Activated naive CD4-positive, alpha-beta T cell treated with anti-CD3 and anti-CD28 coated beads for 36 hours (primary cell): ENCODE measurements at regions of chr12 and their contacts with region 1.

Region 1: DNA sequence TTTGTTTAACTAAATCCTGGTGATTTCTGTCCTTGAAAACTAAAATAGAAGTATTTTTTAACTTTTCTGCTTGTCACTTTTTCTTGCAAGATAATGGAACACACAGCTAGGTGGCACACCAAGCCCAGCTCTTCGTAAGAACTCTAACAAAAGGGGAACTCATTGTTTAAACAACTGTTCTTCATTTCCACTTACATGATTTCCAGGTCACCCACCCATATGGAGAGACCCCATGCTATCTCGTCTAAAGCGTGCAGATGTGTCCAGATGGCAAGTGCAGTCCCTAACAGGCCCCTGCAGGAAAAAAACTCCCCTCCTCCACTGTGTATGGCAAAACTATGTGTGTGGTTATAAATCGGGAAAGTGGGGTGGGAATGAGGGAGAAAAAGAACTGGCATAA is 43.3 kb upstream of the NT5DC3 start:
- DNase-seq: peak; percentile 75
- H3K4me3 Mint-ChIP-seq: no peak overlapping the region
- H3K27ac Mint-ChIP-seq: no peak overlapping the region
- H3K4me1 Mint-ChIP-seq: peaks cover 22% of the 10 kb centered on the region
- H3K27me3 Mint-ChIP-seq: no peaks in the 10 kb centered on the region

Region 2: DNA sequence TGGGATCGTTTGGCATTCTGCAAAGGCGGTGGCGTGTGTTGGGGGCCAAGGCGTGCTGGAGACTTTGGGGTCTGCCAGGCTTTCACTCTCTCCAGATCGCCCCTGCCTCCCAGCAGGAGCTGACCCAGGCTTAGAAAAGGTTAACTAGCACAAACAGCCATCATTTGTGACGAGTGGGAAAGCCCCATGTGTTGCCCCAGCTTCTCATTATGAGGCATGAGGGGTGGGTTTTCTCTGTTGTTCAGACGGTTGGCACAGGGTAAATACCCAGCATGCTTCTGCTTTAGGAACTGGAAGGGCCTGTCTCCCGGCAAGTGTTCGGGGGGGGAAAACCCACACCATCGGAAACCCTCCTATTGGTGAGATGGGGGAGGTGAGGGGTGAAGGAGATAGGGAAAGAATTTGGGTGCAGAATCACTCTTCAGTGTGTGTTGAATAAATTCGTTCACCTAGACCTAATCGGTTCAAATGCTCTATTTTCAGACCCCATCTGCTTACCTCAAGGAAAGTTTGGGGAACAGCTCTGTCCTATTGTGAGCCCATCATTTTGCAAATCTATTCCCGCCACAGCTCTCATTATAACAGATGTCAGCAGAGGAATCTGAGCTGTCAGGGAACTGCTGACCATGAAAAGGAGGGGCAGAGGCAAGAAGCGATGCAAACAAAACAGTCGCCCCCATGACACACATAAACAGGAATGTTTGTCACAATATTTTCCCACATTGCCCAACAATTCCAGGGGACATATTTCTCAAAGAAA is 353.8 kb before region 1 on chr12:
- CTCF ChIA-PET with region 1: no interaction called
- intact Hi-C with region 1: no loop called
- DNase-seq: peak; percentile 34
- H3K4me3 Mint-ChIP-seq: no peak overlapping the region
- H3K27ac Mint-ChIP-seq: no peak overlapping the region
- H3K4me1 Mint-ChIP-seq: peaks cover 7% of the 10 kb centered on the region
- H3K27me3 Mint-ChIP-seq: peaks cover 3% of the 10 kb centered on the region

Region 3: GRCh38 chr12:103901518-103902173 is 17.3 kb after region 1 on chr12:
- CTCF ChIA-PET with region 1: interaction called, 10 read pairs
- intact Hi-C with region 1: no loop called
- DNase-seq: peak; percentile 57
- H3K4me3 Mint-ChIP-seq: peak overlapping the region; percentile 49
- H3K27ac Mint-ChIP-seq: peak overlapping the region; percentile 41
- H3K4me1 Mint-ChIP-seq: peaks cover 58% of the 10 kb centered on the region
- H3K27me3 Mint-ChIP-seq: no peaks in the 10 kb centered on the region

Region 4: DNA sequence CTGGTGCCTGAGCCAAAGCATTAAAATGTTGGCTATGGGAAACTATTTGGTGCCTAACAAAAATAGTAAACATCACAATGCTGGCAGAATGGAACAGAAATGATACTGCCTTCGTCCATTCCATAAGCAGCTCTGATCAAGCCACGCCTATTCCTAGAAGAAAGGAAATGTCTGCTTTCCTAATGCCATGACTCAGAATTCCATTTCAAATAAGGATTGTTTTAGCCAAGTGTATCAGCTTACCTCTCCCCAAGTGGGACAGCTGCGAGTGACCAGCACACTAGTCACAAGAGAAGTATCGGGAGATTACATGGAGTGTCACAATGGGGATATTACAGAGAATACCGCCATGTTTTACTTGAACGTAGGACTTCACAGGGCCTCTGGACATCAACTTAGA is 126.9 kb after region 1 on chr12:
- CTCF ChIA-PET with region 1: no interaction called
- intact Hi-C with region 1: no loop called
- DNase-seq: no peak
- H3K4me3 Mint-ChIP-seq: no peak overlapping the region
- H3K27ac Mint-ChIP-seq: no peak overlapping the region
- H3K4me1 Mint-ChIP-seq: no peaks in the 10 kb centered on the region
- H3K27me3 Mint-ChIP-seq: peaks cover 2% of the 10 kb centered on the region